Transverse colon (tissue), 4 donors: ENCODE measurements at regions of chr2 and their contacts with region 1.

Region 1: DNA sequence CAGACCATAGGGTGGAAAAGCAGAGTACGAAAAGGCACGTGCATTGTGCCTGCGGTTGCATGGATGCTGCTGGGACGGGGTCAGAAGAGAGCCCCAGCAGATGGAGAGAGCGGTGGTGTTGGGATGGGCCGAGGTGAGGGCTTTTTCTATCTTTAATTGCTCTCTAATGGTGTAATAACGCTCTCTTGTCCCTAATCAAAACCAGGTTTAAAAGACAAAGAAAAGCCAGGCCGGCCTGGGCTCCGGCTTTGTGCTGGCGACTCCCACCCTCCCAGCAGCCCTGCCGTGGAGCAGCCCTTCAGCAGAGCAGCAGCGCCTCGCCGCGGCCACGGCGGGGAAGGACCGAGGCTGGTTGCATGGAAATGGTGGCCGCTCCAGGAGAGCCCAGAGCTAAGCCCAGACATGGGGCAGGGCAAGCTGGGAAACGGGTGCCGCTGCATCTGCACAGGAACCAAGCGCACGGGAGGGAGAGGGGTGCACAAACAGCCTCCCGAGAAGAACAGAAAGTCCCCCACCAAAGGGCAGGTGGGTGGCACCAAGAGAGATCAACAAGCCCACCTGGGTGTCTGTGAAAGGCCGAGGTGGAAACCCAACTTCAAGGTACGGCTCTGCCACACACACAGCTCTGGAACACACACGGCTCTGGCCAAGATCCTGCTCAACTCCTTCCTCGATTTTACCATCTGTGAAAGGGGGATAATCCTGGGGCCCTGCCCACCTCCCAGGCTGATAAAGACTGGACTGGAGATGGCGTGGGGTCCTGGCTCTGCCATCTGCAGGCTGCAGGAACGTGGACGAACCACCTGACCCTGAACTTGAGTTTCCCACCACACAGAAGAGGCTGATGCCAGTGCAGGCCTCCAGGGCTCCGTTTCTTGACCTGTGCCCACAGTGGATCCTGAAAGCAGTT is 15.0 kb downstream of the HS1BP3 start:
- DNase-seq: peak; percentile 88
- H3K4me3 ChIP-seq: no peak overlapping the region
- H3K27ac ChIP-seq: peak overlapping the region; percentile 64 to 88 (median 85)
- H3K4me1 ChIP-seq: peaks cover 25 to 40% (median 29%) of the 10 kb centered on the region in 4 donors
- H3K27me3 ChIP-seq: no peaks in the 10 kb centered on the region
- CTCF ChIP-seq: peak; percentile 86 to 94 (median 91)
- EP300 ChIP-seq: no peak
- POLR2A ChIP-seq: no peak

Region 2: GRCh38 chr2:20403774-20404312 is 232.1 kb before region 1 on chr2:
- in situ Hi-C with region 1: loop called in 2 of 4 experiments (anchors 10 kb)
- intact Hi-C with region 1: no loop called
- DNase-seq: peak; percentile 6
- H3K4me3 ChIP-seq: no peak overlapping the region
- H3K27ac ChIP-seq: peak overlapping the region in 3 of 4 donors; percentile 47 to 63 (median 61)
- H3K4me1 ChIP-seq: no peaks in the 10 kb centered on the region
- H3K27me3 ChIP-seq: no peaks in the 10 kb centered on the region
- CTCF ChIP-seq: no peak
- EP300 ChIP-seq: no peak
- POLR2A ChIP-seq: no peak

Region 3: DNA sequence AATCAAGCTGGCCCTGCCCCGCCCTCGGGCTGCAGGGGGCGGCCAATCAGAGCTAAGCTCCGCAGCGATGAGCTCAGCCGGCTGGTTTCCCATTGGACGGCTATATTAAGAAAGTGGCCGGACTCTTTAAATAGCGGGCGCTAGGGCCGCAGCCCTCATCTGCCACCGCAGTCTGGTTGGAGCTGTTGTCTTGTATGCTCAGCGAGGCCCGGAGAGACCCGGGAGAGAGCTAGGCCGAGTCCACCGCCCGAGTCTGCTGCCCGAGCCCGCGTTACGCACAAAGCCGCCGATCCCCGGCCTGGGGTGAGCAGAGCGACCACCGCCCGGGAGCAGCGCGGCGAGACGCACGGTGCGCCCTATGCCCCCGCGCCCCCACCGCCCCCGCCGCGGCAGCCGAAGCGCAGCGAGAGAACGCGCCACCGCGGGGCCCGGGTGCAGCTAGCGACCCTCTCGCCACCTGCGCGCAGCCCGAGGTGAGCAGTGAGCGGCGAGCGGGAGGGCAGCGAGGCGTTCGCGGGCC is 189.0 kb before region 1 on chr2 and contains the start of gene RHOB:
- in situ Hi-C with region 1: loop called in 2 of 4 experiments (anchors 5 to 25 kb)
- intact Hi-C with region 1: loop called (anchors 2 kb)
- DNase-seq: peak; percentile 97
- H3K4me3 ChIP-seq: peak within 1 kb of the TSS; percentile 62 to 96 (median 81)
- H3K27ac ChIP-seq: peak within 1 kb of the TSS; percentile 97 to 99 (median 97)
- H3K4me1 ChIP-seq: peaks cover 9 to 56% (median 27%) of the 10 kb centered on the region in 4 donors
- H3K27me3 ChIP-seq: no peaks in the 10 kb centered on the region
- CTCF ChIP-seq: peak in 1 of 5 experiments; percentile 19
- EP300 ChIP-seq: no peak
- POLR2A ChIP-seq: peak; percentile 100
- total RNA-seq, gene RHOB: 360 to 732 (median 532) TPM

Region 4: GRCh38 chr2:20561701-20562454 is 74.1 kb before region 1 on chr2:
- in situ Hi-C with region 1: no loop called
- intact Hi-C with region 1: no loop called
- DNase-seq: no peak
- H3K4me3 ChIP-seq: no peak overlapping the region
- H3K27ac ChIP-seq: no peak overlapping the region
- H3K4me1 ChIP-seq: no peaks in the 10 kb centered on the region
- H3K27me3 ChIP-seq: no peaks in the 10 kb centered on the region
- CTCF ChIP-seq: no peak
- EP300 ChIP-seq: no peak
- POLR2A ChIP-seq: no peak